ENCODE measurements at regions of chr18 and their contacts with region 1.

Region 1: DNA sequence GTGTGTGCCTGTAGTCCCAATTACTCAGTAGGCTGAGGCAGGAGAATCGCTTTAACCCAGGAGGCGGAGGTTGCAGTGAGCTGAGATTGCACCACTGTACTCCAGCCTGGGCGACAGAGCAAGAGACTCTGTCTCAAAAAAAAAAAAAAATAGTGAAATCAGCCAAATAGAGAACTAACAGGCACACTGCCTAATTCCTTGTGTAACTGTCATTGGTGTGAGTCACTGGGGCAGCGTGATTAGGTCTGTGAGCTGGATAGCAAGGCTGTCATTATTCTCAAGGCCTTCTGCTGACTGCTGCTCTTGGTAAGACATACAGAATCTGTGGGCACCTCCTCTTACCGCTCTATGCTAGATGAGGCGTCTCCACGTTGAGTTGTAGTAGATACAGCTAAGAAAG is 270.3 kb downstream of the NEDD4L start:
- DNase-seq: peak; percentile 31 to 82
- H3K4me3 ChIP-seq: no peak overlapping the region
- H3K27ac ChIP-seq: peak overlapping the region; percentile 45
- H3K4me1 ChIP-seq: peaks cover 49% of the 10 kb centered on the region
- H3K27me3 ChIP-seq: no peaks in the 10 kb centered on the region
- CTCF ChIP-seq: no peak

Region 2: GRCh38 chr18:57754577-57755338 is 559.5 kb before region 1 on chr18:
- CTCF ChIA-PET with region 1: interaction called, 13 read pairs
- POLR2A ChIA-PET with region 1: no interaction called
- intact Hi-C with region 1: no loop called
- DNase-seq: no peak
- H3K4me3 ChIP-seq: no peak overlapping the region
- H3K27ac ChIP-seq: no peak overlapping the region
- H3K4me1 ChIP-seq: peaks cover 11% of the 10 kb centered on the region; the same call in 1 of the 2 replicates
- H3K27me3 ChIP-seq: no peaks in the 10 kb centered on the region
- CTCF ChIP-seq: no peak

Region 3: DNA sequence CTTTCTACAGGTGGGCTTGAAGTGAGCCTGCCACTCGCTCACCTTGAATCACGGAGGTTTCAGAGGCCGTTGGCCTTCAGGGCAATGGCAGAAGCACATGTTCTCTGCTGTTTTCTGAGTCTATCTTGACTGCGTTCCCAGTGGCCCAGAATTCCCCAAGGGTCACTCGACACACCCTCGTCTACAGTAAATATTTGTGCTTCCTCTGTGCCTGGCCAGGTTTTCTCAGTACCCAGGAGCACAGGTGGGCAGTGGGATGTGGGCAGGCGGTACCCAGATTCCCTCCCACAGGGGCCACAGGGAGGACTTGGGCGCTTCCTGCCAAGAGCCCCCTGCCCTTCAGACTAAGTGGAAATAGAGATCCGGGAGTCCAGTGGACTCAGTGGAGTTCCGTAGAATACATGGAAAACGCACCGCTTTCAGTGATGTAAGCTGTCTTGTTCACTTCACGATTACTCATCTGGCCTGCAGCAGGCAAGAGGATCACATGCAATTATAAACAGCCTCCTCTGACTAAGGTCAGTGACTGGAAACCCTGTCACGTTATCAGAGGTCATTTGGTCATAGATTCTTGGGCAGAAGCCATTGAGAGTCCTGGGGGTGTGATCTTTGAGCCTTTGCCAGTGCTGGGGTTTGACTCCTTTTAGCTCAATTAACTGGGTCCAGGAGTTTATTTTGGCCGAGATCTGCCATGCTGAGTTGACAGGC is 90.4 kb before region 1 on chr18:
- CTCF ChIA-PET with region 1: interaction called, 3 read pairs
- POLR2A ChIA-PET with region 1: interaction called, 5 read pairs
- intact Hi-C with region 1: loop called (anchors 5 kb)
- DNase-seq: peak; percentile 51 to 93
- H3K4me3 ChIP-seq: peak overlapping the region; percentile 80
- H3K27ac ChIP-seq: peak overlapping the region; percentile 89
- H3K4me1 ChIP-seq: peaks cover 49% of the 10 kb centered on the region
- H3K27me3 ChIP-seq: no peaks in the 10 kb centered on the region
- CTCF ChIP-seq: no peak

Region 4: DNA sequence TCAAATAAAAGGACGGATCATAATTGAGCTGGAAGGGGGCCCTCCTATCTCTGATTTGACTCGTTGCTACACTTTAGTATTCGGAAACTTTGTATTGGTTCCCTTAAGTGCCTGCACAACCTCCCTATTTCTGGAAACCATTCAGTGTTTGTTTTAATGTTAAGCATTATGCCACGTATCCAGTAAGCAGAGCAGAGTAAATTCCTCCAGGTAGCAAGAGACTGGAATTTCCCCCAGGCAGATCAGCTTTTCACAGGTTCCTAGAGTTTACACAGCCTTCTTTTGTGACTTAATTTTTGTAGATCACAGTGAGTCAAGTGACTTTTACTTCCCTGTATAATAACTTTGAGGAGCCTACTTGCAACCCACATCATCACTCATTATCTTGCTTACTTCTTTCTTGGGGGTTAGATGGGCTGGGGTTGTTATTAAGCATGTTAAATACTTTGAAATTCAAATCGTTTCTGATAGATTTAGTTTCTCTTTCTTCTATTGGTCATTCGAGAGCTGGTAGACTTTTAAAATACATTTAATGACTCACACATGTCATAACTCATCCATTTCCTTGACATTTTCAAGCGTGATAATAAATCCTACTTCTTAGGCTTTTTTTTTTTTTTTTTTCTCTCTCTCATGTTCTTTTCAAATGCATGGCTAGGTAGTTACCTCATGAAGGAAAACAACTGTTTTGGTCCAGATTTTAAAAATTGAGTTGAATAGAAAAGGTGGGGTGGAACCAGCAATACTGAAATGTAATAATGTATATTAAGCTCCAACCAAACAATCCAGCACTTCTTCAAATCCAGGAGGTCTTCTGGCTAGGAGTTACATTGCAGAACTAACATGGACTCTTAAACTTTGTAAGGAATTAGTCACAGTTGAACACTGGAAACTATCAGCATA is 51.0 kb before region 1 on chr18:
- CTCF ChIA-PET with region 1: no interaction called
- POLR2A ChIA-PET with region 1: interaction called, 9 read pairs
- intact Hi-C with region 1: loop called (anchors 1 kb)
- DNase-seq: peak; percentile 31 to 95
- H3K4me3 ChIP-seq: peak overlapping the region; percentile 33
- H3K27ac ChIP-seq: peak overlapping the region; percentile 94
- H3K4me1 ChIP-seq: peaks cover 81% of the 10 kb centered on the region
- H3K27me3 ChIP-seq: no peaks in the 10 kb centered on the region
- CTCF ChIP-seq: no peak

Region 5: DNA sequence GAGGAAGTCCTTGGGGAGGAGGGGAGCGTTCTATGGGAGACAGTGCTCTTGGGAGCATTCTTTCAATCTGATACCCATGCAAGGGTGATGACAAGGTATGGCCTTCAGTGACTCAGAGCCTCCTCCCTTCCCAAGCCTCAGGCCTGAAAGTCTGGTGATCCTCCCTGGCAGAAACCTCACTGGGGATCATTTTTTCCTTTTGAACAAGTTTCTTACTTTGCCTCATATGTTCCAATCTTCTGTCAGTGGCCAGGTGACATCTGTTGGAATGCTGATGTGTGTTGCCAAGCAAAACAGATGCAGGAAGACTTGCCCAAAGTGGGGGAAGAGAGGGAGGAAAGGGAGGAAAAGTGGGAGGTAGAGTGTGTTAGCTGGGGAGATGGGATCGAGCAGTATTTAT is 45.4 kb before region 1 on chr18:
- CTCF ChIA-PET with region 1: no interaction called
- POLR2A ChIA-PET with region 1: interaction called, 4 read pairs
- intact Hi-C with region 1: loop called (anchors 1 kb)
- DNase-seq: peak; percentile 71 to 97
- H3K4me3 ChIP-seq: peak overlapping the region; percentile 47; the same call in 1 of the 2 replicates
- H3K27ac ChIP-seq: peak overlapping the region; percentile 95
- H3K4me1 ChIP-seq: peaks cover 76% of the 10 kb centered on the region
- H3K27me3 ChIP-seq: no peaks in the 10 kb centered on the region
- CTCF ChIP-seq: no peak

Region 6: GRCh38 chr18:58466636-58467205 is 152.4 kb after region 1 on chr18:
- CTCF ChIA-PET with region 1: no interaction called
- POLR2A ChIA-PET with region 1: no interaction called
- intact Hi-C with region 1: no loop called
- DNase-seq: no peak
- H3K4me3 ChIP-seq: no peak overlapping the region
- H3K27ac ChIP-seq: no peak overlapping the region
- H3K4me1 ChIP-seq: no peaks in the 10 kb centered on the region
- H3K27me3 ChIP-seq: peaks cover 10% of the 10 kb centered on the region
- CTCF ChIP-seq: no peak

Region 7: GRCh38 chr18:58493516-58494253 is 179.4 kb after region 1 on chr18:
- CTCF ChIA-PET with region 1: no interaction called
- POLR2A ChIA-PET with region 1: no interaction called
- intact Hi-C with region 1: no loop called
- DNase-seq: peak; percentile 56 to 57
- H3K4me3 ChIP-seq: no peak overlapping the region
- H3K27ac ChIP-seq: no peak overlapping the region
- H3K4me1 ChIP-seq: 0 out of 2 replicates have a peak, but pooled peaks cover 3% of the 10 kb centered on the region
- H3K27me3 ChIP-seq: no peaks in the 10 kb centered on the region; the same call in 1 of the 2 replicates
- CTCF ChIP-seq: peak; percentile 90

Region 8: GRCh38 chr18:58605027-58606020 is 291.0 kb after region 1 on chr18:
- CTCF ChIA-PET with region 1: no interaction called
- POLR2A ChIA-PET with region 1: interaction called, 14 read pairs
- intact Hi-C with region 1: no loop called
- DNase-seq: peak in 1 of 2 experiments; percentile 81
- H3K4me3 ChIP-seq: no peak overlapping the region
- H3K27ac ChIP-seq: peak overlapping the region; percentile 22; the same call in 1 of the 2 replicates
- H3K4me1 ChIP-seq: peaks cover 25% of the 10 kb centered on the region
- H3K27me3 ChIP-seq: no peaks in the 10 kb centered on the region
- CTCF ChIP-seq: no peak